H1 (cell line): ENCODE measurements at regions of chr19 and their contacts with region 1.

Region 1: DNA sequence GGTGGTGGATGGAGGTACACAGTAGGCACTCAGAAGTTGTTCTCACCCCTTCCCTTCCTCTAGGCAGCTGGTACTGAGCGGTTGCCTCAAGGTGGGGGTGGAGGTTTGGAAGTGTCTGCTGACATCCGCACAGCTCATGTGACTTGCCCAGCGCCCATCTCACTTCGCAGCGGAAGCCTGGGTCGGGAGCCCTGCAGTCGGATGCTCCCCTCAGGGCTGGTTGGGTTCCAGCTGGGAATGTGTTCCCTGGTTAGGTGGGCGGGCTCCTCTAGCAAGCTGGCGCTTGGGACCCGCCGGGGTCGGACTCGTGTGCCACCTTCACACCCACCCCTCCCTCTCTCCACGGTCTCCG is 10.2 kb downstream of the PPP1R37 start:
- DNase-seq: no peak
- H3K4me3 ChIP-seq: no peak overlapping the region
- H3K27ac ChIP-seq: no peak overlapping the region
- H3K4me1 ChIP-seq: peaks cover 0 to 28% (median 11%) of the 10 kb centered on the region in 4 experiments; a peak in 6 of 7 replicates
- H3K27me3 ChIP-seq: no peaks in the 10 kb centered on the region
- CTCF ChIP-seq: no peak
- EP300 ChIP-seq: no peak
- POLR2A ChIP-seq: no peak
- RAD21 ChIP-seq: no peak

Region 2: DNA sequence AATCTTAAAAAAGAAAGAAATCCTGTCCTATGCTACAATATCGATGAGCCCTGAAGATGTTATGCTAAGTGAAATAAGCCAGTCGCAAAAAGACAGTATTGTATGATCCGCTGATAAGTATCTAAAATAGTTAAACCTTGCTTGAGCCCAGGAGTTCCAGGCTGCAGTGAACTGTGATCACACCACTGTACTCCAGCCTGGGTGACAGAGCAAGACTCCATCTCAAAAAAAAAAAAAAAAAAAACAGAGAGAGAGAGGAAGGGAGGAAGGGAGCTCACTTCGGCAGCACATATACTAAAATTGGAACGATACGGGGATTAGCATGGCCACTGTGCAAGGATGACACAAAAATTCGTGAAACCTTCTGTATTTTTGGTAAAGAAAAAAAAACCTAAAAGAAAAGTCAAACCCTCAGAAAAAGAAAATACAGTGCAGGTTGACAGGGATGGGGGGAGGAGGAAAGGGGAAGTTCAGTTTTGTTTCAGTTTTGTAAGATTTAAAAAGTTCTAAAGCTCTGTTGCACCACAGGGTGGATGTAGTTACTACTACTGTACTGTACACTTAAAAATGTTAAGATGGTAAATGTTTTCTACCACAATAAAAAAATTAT is 55.8 kb before region 1 on chr19:
- CTCF ChIA-PET with region 1: no interaction called
- POLR2A ChIA-PET with region 1: no interaction called
- DNase-seq: no peak
- H3K4me3 ChIP-seq: no peak overlapping the region
- H3K27ac ChIP-seq: no peak overlapping the region
- H3K4me1 ChIP-seq: no peaks in the 10 kb centered on the region
- H3K27me3 ChIP-seq: no peaks in the 10 kb centered on the region
- CTCF ChIP-seq: no peak
- EP300 ChIP-seq: no peak
- POLR2A ChIP-seq: no peak
- RAD21 ChIP-seq: no peak

Region 3: GRCh38 chr19:45115809-45116615 is 12.9 kb after region 1 on chr19:
- CTCF ChIA-PET with region 1: interaction called, 19 read pairs
- POLR2A ChIA-PET with region 1: interaction called, 30 read pairs
- DNase-seq: no peak
- H3K4me3 ChIP-seq: no peak overlapping the region
- H3K27ac ChIP-seq: no peak overlapping the region
- H3K4me1 ChIP-seq: peaks cover 0 to 21% (median 4%) of the 10 kb centered on the region in 4 experiments; a peak in 6 of 7 replicates
- H3K27me3 ChIP-seq: no peaks in the 10 kb centered on the region
- CTCF ChIP-seq: no peak
- EP300 ChIP-seq: no peak
- POLR2A ChIP-seq: no peak
- RAD21 ChIP-seq: peak; percentile 7 to 16; a peak in 2 of 4 replicates